ENCODE measurements at regions of chr9 and their contacts with region 1.

Region 1: DNA sequence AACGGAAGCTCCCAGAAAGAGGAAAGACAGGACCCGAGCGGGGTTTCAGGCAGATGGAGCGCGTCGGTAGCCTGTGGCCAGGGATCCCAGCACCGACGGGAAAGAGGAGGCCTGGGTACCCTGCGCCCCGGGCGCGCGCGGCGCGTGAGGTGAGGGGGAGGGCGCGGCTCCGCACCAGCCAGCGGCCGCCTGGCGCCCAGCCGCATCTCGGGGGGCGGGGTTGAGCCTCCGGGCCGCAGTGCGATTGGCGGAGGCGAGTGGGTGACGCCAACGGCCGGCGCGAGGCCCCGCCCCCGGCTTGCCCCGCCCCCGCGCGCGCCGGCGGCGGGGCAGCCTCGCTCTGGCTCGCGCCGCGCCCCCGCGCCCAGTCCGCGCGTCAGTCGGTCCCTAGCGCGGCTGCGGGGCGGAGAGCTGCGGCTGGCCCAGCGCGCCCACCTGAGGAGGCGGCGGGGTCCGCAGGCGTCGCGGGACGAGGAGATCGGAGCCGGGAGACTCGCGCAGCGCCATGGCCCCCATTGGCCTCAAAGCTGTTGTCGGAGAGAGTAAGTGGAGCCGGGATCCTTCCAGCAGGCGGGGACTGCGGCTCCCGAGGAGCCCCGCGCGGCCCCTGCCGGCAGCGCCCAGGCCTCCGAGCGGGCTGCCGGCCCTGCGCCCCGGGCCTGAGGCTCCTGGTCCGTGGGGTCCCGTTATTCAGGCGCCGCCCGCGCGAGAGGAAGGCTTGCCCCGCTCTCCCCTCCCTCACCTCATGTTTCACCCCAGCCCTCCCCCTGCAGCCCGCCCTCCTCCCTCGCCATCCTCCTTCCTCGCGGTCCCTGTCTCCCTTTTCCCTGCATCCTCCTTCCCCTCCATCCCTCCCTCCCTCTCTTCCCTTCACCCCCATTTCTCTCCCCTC is at the start of gene STXBP1:
- DNase-seq: peak; percentile 94
- H3K4me3 ChIP-seq: peak within 1 kb of the TSS; percentile 64 to 94 (median 84)
- H3K27ac ChIP-seq: peak within 1 kb of the TSS; percentile 91 to 94 (median 92)
- H3K4me1 ChIP-seq: peaks cover 0 to 33% (median 21%) of the 10 kb centered on the region in 4 donors
- H3K27me3 ChIP-seq: no peaks in the 10 kb centered on the region
- CTCF ChIP-seq: peak in 1 of 4 experiments; percentile 28
- EP300 ChIP-seq: no peak
- POLR2A ChIP-seq: peak; percentile 15 to 36
- total RNA-seq, gene STXBP1: 32.3 to 97.2 (median 41.0) TPM

Region 2: DNA sequence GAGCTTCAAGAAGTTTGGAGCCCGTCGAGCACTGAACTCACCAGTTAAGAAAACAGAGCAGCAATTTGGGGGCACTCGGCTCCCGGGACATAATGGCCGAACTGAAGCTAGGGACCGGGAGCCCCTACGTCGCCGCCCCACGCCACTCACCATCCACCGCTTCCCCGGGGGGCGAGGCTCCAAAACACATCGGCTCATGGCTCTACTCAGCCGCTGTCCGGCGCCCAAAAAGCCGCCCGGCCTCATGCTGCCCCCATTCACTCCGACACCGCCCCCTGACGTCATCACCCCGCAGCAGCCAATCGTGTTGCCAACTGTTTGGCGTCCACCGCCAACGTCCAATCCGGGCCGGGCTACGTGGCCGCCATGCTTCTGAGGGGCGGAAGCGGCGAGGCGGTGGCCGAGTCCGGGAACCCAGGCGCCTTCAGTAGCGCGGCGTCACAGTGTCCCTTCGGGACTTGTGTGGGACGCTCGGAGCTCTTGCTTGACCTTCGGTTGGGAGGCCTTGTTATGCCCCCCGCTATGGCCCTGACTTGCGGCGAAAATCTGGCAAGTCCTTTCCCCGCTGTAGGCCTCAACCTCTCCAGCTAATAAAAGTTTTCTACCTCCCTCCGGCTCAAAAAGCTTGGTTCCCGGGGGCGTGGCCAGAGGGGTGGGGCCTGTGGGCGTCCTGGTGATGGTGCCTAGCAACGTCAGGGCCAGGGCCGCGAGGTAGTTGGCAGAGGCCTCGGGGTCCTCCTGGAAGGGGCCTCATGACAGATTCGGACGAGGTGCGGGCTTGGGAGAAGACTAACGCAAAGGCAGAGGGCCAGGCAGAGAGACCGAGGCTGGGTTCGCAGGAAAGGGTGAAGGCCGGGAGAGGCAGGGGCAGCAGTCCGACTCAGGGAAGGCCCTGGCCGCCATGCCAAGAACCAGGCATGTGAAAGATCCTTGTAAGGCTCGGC is 103.5 kb after region 1 on chr9 and contains the starts of genes PTRH1 and TTC16:
- intact Hi-C with region 1: loop called (anchors 5 kb)
- DNase-seq: peak; percentile 99
- H3K4me3 ChIP-seq: peak within 1 kb of the TSS; percentile 62 to 77 (median 72)
- H3K27ac ChIP-seq: peak within 1 kb of the TSS; percentile 81 to 90 (median 84)
- H3K4me1 ChIP-seq: peaks cover 0 to 23% (median 20%) of the 10 kb centered on the region in 4 donors
- H3K27me3 ChIP-seq: no peaks in the 10 kb centered on the region
- CTCF ChIP-seq: no peak
- EP300 ChIP-seq: no peak
- POLR2A ChIP-seq: peak; percentile 16 to 30
- total RNA-seq, gene PTRH1: 8.9 to 25.8 (median 19.4) TPM
- total RNA-seq, gene TTC16: not detected

Region 3: GRCh38 chr9:127930231-127931091 is 318.3 kb after region 1 on chr9 and contains the start of gene PIP5KL1:
- intact Hi-C with region 1: loop called (anchors 5 kb)
- DNase-seq: peak; percentile 88
- H3K4me3 ChIP-seq: peak within 1 kb of the TSS; percentile 21 to 55 (median 45)
- H3K27ac ChIP-seq: no peak within 1 kb of the TSS
- H3K4me1 ChIP-seq: peaks cover 0 to 34% (median 32%) of the 10 kb centered on the region in 4 donors
- H3K27me3 ChIP-seq: peaks cover 22 to 65% (median 33%) of the 10 kb centered on the region in 3 donors
- CTCF ChIP-seq: no peak
- EP300 ChIP-seq: no peak
- POLR2A ChIP-seq: no peak
- total RNA-seq, gene PIP5KL1: 0.16 to 4.2 (median 2.6) TPM

Measured in sigmoid colon (tissue), 7 donors.